MCF 10A (cell line): ENCODE measurements at regions of chr12 and their contacts with region 1.

Region 1: GRCh38 chr12:10364815-10365622 is 24.8 kb downstream of the KLRK1 start:
- DNase-seq: peak; percentile 83
- H3K4me3 Mint-ChIP-seq: no peak overlapping the region
- H3K27ac Mint-ChIP-seq: no peak overlapping the region
- H3K4me1 Mint-ChIP-seq: peaks cover 22% of the 10 kb centered on the region
- H3K27me3 Mint-ChIP-seq: no peaks in the 10 kb centered on the region
- CTCF ChIP-seq: no peak

Region 2: GRCh38 chr12:10235761-10236631 is 129.0 kb before region 1 on chr12:
- CTCF ChIA-PET with region 1: interaction called, 35 read pairs
- POLR2A ChIA-PET with region 1: interaction called, 3 read pairs
- intact Hi-C with region 1: loop called (anchors 2 kb)
- DNase-seq: peak; percentile 53
- H3K4me3 Mint-ChIP-seq: no peak overlapping the region
- H3K27ac Mint-ChIP-seq: no peak overlapping the region
- H3K4me1 Mint-ChIP-seq: peaks cover 17% of the 10 kb centered on the region
- H3K27me3 Mint-ChIP-seq: no peaks in the 10 kb centered on the region
- CTCF ChIP-seq: peak; percentile 68

Region 3: GRCh38 chr12:10339053-10339840 is 25.8 kb before region 1 on chr12:
- CTCF ChIA-PET with region 1: no interaction called
- POLR2A ChIA-PET with region 1: interaction called, 3 read pairs
- intact Hi-C with region 1: loop called (anchors 2 kb)
- DNase-seq: peak; percentile 26
- H3K4me3 Mint-ChIP-seq: no peak overlapping the region
- H3K27ac Mint-ChIP-seq: peak overlapping the region; percentile 85
- H3K4me1 Mint-ChIP-seq: peaks cover 29% of the 10 kb centered on the region
- H3K27me3 Mint-ChIP-seq: no peaks in the 10 kb centered on the region
- CTCF ChIP-seq: no peak

Region 4: DNA sequence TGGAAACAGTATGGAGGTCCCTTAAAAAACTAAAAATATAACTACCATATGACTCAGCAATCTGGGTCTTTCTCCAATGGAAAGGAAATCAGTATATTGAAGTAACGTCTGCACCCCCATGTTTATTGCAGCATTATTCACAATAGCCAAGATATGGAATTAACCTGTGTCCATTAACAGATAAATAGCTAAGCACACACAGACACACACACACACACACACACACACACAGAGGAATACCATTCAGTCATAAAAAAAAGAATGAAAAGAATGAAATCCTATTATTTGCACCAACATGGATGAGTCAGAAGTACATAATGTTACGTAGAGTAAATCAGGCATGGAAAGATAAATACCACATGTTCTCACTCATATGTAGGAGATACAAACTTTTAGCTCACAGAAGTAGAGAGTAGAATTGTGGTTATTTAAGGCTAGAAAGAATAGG is 20.2 kb after region 1 on chr12:
- CTCF ChIA-PET with region 1: interaction called, 3 read pairs
- POLR2A ChIA-PET with region 1: interaction called, 135 read pairs
- intact Hi-C with region 1: no loop called
- DNase-seq: peak; percentile 72
- H3K4me3 Mint-ChIP-seq: peak overlapping the region; percentile 7
- H3K27ac Mint-ChIP-seq: peak overlapping the region; percentile 74
- H3K4me1 Mint-ChIP-seq: peaks cover 17% of the 10 kb centered on the region
- H3K27me3 Mint-ChIP-seq: no peaks in the 10 kb centered on the region
- CTCF ChIP-seq: no peak

Region 5: GRCh38 chr12:10501031-10501430 is 136.0 kb after region 1 on chr12:
- CTCF ChIA-PET with region 1: interaction called, 28 read pairs
- POLR2A ChIA-PET with region 1: no interaction called
- intact Hi-C with region 1: loop called (anchors 1 kb)
- DNase-seq: peak; percentile 26
- H3K4me3 Mint-ChIP-seq: no peak overlapping the region
- H3K27ac Mint-ChIP-seq: no peak overlapping the region
- H3K4me1 Mint-ChIP-seq: peaks cover 6% of the 10 kb centered on the region
- H3K27me3 Mint-ChIP-seq: no peaks in the 10 kb centered on the region
- CTCF ChIP-seq: peak; percentile 65

Region 6: DNA sequence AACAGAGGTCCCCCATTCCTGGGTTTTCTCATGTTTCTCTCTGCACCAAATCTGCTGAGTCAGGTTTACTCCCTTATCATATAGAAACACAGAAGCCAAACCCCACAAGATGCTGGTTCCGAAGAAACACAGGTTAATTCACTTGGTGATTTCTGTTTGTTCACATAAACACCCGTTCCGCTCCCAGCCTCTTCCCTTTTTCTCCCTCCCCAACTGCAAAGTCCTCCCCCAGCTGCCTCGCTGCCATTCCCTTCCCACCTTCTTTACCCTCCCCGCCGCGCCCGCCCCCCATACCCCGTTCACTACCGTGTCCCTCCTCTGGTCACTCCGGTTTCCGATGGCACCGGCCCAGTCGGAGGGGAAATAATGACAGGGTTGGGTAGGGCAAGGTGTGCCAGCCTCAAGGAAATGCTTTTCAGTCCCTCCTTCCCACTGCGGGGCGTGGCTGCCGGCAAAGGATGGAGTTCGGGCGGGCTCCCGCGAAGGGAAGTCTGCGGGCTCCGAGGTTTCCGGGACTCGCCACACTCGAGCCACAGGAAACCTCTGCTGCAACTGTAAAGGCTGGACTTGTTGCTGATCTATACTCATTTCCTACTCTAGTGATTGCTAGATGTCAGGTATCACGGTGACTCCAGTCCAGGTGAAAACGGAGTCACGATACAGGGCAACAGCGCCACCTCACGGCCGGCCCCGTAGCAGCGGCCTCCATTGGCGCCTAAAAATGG is 308.8 kb after region 1 on chr12 and contains the start of gene STYK1:
- CTCF ChIA-PET with region 1: interaction called, 4 read pairs
- POLR2A ChIA-PET with region 1: no interaction called
- intact Hi-C with region 1: loop called (anchors 1 kb)
- DNase-seq: peak; percentile 72
- H3K4me3 Mint-ChIP-seq: peak within 1 kb of the TSS; percentile 74
- H3K27ac Mint-ChIP-seq: no peak within 1 kb of the TSS
- H3K4me1 Mint-ChIP-seq: no peaks in the 10 kb centered on the region
- H3K27me3 Mint-ChIP-seq: no peaks in the 10 kb centered on the region
- CTCF ChIP-seq: peak; percentile 96
- total RNA-seq, gene STYK1: 0.14 and 0.56 TPM in 2 replicates

Region 7: GRCh38 chr12:10802587-10802986 is 437.6 kb after region 1 on chr12 and contains the start of gene TAS2R7:
- CTCF ChIA-PET with region 1: no interaction called
- POLR2A ChIA-PET with region 1: no interaction called
- intact Hi-C with region 1: no loop called
- DNase-seq: no peak
- H3K4me3 Mint-ChIP-seq: no peak within 1 kb of the TSS
- H3K27ac Mint-ChIP-seq: no peak within 1 kb of the TSS
- H3K4me1 Mint-ChIP-seq: no peaks in the 10 kb centered on the region
- H3K27me3 Mint-ChIP-seq: peaks cover 68% of the 10 kb centered on the region
- CTCF ChIP-seq: no peak
- total RNA-seq, gene TAS2R7: not detected in 2 replicates